Sigmoid colon (tissue), 7 donors: ENCODE measurements at regions of chr15 and their contacts with region 1.

Region 1: DNA sequence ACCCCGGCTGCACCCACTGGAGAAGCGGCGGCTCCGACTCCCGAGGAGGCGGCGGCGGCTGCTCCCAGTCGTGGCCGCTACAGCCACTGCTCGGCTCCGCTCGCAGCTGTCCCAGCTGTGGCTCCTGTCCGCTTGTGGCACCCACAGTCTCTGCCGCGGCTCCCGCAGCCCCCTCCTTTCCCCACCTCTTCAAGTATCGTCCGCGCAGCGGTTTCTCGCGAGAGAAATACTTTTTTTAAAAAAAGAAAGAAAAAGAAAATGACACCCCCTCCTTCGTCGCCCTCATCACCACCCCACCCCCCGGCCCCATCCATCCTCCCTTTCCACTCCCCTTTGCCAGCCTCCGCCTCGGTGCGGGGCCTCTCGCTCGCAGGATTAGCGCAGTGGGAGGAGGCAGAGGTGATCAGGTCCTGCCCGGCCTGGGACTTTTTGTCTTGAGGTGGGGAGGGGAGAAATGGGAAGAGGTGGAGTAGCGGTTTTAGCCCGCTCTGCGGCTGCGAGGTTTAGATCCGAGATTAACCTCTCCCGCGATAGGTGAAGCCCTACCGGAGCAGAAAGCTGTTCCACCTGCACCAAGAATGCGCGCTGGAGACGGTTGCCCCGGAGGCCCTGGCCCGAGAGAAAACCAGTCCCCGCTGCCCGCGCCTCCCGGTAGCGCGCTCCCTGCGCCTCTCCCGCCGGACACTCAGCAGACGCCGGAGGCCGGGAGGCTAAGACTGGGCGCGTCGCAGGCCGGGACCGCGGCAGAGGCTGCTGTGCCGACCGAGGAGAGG is at the start of gene FBN1:
- DNase-seq: peak; percentile 90
- H3K4me3 ChIP-seq: peak within 1 kb of the TSS; percentile 56 to 72 (median 68)
- H3K27ac ChIP-seq: peak within 1 kb of the TSS; percentile 82 to 95 (median 86)
- H3K4me1 ChIP-seq: peaks cover 0 to 26% (median 23%) of the 10 kb centered on the region in 4 donors
- H3K27me3 ChIP-seq: peaks cover 0 to 25% (median 9%) of the 10 kb centered on the region in 3 donors
- CTCF ChIP-seq: no peak
- EP300 ChIP-seq: no peak
- POLR2A ChIP-seq: peak; percentile 43 to 67
- total RNA-seq, gene FBN1: 57.0 to 173 (median 74.7) TPM

Region 2: GRCh38 chr15:48414015-48414414 is 231.7 kb before region 1 on chr15:
- intact Hi-C with region 1: loop called (anchors 10 kb)
- DNase-seq: peak; percentile 79
- H3K4me3 ChIP-seq: no peak overlapping the region
- H3K27ac ChIP-seq: peak overlapping the region in 3 of 4 donors; percentile 49 to 66 (median 55)
- H3K4me1 ChIP-seq: peaks cover 0 to 1% (median 0%) of the 10 kb centered on the region in 4 donors
- H3K27me3 ChIP-seq: no peaks in the 10 kb centered on the region
- CTCF ChIP-seq: no peak
- EP300 ChIP-seq: no peak
- POLR2A ChIP-seq: no peak

Region 3: DNA sequence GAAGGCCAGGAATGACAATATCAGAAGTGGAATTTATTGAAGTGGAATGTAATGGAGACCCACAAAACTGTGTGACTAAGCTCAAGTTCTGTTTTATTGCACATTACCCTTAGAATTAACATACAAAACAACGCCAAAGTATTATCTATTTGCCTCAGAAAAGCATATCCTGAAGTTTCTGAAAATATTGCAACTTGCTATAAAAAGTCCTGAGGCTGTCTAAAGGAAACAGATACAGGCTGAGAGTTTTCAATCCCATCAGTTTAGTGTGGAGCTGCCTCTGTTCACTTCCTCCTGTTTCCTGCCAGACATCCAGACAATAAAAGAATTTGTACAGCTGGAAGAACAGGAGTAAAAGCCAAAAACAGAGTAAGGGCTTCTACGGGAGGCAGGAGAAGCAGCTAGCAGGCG is 109.1 kb before region 1 on chr15:
- intact Hi-C with region 1: loop called (anchors 10 kb)
- DNase-seq: no peak
- H3K4me3 ChIP-seq: no peak overlapping the region
- H3K27ac ChIP-seq: peak overlapping the region in 3 of 4 donors; percentile 53 to 63 (median 62)
- H3K4me1 ChIP-seq: peaks cover 0 to 14% (median 2%) of the 10 kb centered on the region in 4 donors
- H3K27me3 ChIP-seq: no peaks in the 10 kb centered on the region
- CTCF ChIP-seq: no peak
- EP300 ChIP-seq: no peak
- POLR2A ChIP-seq: no peak

Region 4: GRCh38 chr15:48604567-48604966 is 41.2 kb before region 1 on chr15:
- intact Hi-C with region 1: no loop called
- DNase-seq: no peak
- H3K4me3 ChIP-seq: no peak overlapping the region
- H3K27ac ChIP-seq: no peak overlapping the region
- H3K4me1 ChIP-seq: peaks cover 0 to 10% (median 2%) of the 10 kb centered on the region in 4 donors
- H3K27me3 ChIP-seq: no peaks in the 10 kb centered on the region
- CTCF ChIP-seq: no peak
- EP300 ChIP-seq: no peak
- POLR2A ChIP-seq: no peak